ENCODE measurements at regions of chr10 and their contacts with region 1.

Region 1: DNA sequence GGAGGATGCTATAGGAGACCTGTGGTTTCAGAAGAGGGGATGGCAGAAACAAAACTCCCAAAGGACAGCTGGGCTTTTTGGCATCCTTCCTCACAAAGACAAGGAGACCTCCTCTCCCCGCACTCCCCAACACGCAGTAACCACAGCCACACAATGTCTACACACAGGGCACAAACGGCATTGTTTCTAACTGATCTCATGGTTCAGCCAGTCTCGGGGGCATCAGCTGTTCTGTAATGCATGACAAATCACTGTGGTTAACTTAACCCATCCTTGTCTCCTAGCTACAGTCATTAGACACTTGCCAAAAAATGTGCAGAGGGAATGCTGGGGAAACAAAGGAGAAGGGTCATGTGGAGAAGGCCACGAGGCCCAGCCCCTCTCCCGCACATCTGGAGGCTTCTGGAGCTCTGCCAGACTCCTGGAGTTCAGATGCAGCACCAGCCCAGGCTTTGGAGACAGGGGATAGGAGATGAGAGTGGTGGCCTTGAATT is 7.6 kb upstream of the ADAMTS14 start:
- DNase-seq: peak; percentile 97
- H3K4me3 ChIP-seq: no peak overlapping the region
- H3K27ac ChIP-seq: peak overlapping the region; percentile 73
- H3K4me1 ChIP-seq: peaks cover 14% of the 10 kb centered on the region
- H3K27me3 ChIP-seq: no peaks in the 10 kb centered on the region
- CTCF ChIP-seq: no peak

Region 2: DNA sequence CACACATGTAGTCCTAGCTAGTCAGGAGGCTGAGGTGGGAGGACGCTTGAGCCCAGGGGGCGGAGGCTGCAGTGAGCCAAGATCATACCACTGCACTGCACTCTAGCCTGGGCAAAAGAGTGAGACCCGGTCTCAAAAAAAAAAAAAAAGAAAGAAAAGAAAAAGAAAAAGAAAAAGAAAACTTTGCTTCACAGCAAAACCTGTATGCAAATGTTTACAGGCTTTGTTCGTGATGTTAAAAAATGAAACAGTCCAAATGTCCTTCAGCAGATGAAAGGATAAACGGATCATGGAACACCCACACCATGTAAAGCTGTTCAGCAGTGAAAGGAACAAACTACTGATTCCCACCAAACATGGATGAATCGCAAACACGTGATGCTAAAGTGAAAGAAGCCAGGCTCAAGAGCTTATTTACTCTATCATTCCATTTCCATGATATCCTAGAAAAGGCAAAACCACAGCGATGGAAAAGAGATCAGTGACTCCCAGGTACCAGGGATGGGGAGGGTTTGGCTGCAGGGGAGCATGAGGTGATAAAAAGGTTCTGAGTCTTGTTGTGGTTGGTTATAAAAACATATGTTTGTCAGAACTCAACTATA is 297.5 kb before region 1 on chr10:
- CTCF ChIA-PET with region 1: no interaction called
- dilution Hi-C with region 1: no loop called
- in situ Hi-C with region 1: no loop called
- intact Hi-C with region 1: no loop called
- DNase-seq: no peak
- H3K4me3 ChIP-seq: no peak overlapping the region
- H3K27ac ChIP-seq: no peak overlapping the region
- H3K4me1 ChIP-seq: peaks cover 14% of the 10 kb centered on the region
- H3K27me3 ChIP-seq: no peaks in the 10 kb centered on the region
- CTCF ChIP-seq: no peak

Region 3: GRCh38 chr10:70634011-70634410 is 30.7 kb before region 1 on chr10:
- CTCF ChIA-PET with region 1: no interaction called
- dilution Hi-C with region 1: no loop called
- in situ Hi-C with region 1: no loop called
- intact Hi-C with region 1: loop called (anchors 1 kb)
- DNase-seq: peak; percentile 61
- H3K4me3 ChIP-seq: no peak overlapping the region
- H3K27ac ChIP-seq: peak overlapping the region; percentile 18
- H3K4me1 ChIP-seq: peaks cover 9% of the 10 kb centered on the region
- H3K27me3 ChIP-seq: no peaks in the 10 kb centered on the region
- CTCF ChIP-seq: no peak

Region 4: GRCh38 chr10:70649526-70649925 is 15.2 kb before region 1 on chr10:
- CTCF ChIA-PET with region 1: no interaction called
- dilution Hi-C with region 1: no loop called
- in situ Hi-C with region 1: no loop called
- intact Hi-C with region 1: loop called (anchors 1 kb)
- DNase-seq: peak; percentile 98
- H3K4me3 ChIP-seq: no peak overlapping the region
- H3K27ac ChIP-seq: peak overlapping the region; percentile 45
- H3K4me1 ChIP-seq: peaks cover 35% of the 10 kb centered on the region
- H3K27me3 ChIP-seq: no peaks in the 10 kb centered on the region
- CTCF ChIP-seq: no peak

Measured in mammary epithelial cell (primary cell).